ENCODE measurements at regions of chr5 and their contacts with region 1.

Region 1: DNA sequence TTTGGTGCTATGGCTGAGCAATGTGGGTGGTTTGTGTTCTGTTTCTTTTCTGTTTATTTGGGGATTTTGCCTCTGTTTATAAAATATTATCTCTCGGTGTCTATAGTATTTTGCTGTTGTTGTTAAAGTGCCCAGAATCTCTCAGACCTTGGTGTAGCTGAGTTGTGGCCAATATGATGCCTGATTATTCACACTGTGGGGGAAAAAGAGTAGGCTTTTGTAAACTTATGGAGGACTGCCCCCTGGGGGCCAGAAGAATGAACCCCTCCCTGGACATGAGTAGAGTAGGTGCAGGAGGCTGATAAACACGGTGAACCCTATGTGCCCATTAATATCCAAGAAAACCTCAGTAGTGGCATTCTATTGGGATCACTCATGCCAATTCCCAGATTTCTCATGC is 49.0 kb upstream of the DPYSL3 start:
- DNase-seq: peak in 1 of 2 experiments; percentile 57
- H3K4me3 ChIP-seq: no peak overlapping the region
- H3K4me1 ChIP-seq: peaks cover 18% of the 10 kb centered on the region
- H3K27me3 ChIP-seq: peaks cover 3% of the 10 kb centered on the region; the same call in 1 of the 2 replicates

Region 2: DNA sequence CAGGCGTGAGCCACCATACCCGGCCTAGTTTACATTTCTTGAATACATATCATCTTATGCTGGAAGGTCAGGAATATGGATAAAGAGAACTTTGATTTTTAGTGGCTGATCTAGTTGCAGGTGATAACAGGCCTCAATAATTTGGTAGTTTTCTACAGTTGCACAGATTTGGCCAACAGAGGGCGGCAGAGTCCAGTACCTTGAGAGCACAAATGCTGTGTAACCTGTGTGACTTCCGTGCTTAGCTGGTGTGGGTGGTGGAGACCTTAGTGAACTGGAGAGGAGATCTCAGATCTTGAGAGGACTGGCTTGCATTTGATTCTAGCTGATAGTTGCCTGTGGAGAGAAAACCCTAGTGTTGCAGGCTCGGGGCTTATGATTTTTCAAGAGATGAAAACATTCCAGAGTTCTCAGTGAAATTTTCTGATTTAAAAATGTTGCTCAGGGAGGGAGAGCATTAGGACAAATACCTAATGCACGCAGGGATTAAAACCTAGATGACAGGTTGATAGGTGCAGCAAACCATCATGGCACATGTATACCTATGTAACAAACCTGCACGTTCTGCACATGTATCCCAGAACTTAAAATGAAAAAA is 1025.5 kb before region 1 on chr5:
- in situ Hi-C with region 1: loop called (anchors 25 kb)
- DNase-seq: peak; percentile 68 to 88
- H3K4me3 ChIP-seq: no peak overlapping the region
- H3K4me1 ChIP-seq: no peaks in the 10 kb centered on the region
- H3K27me3 ChIP-seq: no peaks in the 10 kb centered on the region

Region 3: GRCh38 chr5:147453875-147454814 is 104.7 kb before region 1 on chr5:
- in situ Hi-C with region 1: loop called (anchors 5 kb)
- DNase-seq: peak; percentile 78 to 94
- H3K4me3 ChIP-seq: peak overlapping the region; percentile 47
- H3K4me1 ChIP-seq: peaks cover 16% of the 10 kb centered on the region
- H3K27me3 ChIP-seq: peaks cover 6% of the 10 kb centered on the region

Region 4: DNA sequence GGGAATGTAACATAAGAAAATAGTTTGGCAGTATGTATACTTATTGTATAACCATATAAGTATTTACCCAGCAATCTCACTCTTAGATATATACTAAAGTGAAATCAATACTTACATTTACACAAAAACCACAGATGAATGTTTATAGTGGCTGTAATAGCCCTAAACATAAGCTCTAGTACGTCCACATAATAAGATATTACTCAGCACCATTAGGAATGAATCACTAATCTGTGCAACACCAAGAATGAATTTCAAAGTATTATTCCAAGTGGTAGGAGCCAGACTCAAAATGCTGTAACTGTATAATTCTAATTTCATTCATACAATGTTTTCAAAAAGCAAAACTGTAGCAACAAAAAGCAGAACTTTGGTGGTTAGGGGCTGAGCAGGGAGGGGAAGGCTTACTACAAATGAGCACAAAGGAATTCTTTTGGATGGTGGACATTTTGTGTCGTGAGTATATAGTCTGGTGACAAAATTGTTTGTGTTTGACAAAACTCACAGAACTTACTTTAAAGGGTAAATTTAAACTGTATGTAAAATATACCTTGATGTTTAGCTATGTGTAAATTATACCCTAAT is 359.4 kb after region 1 on chr5:
- in situ Hi-C with region 1: no loop called
- DNase-seq: no peak
- H3K4me3 ChIP-seq: no peak overlapping the region
- H3K4me1 ChIP-seq: no peaks in the 10 kb centered on the region
- H3K27me3 ChIP-seq: peaks cover 3% of the 10 kb centered on the region

Measured in HAP-1 (cell line).